ENCODE measurements at regions of chr12 and their contacts with region 1.

Region 1: GRCh38 chr12:22018860-22019259 is 27.2 kb upstream of the CMAS start:
- DNase-seq: no peak
- ATAC-seq: peak; percentile 52

Region 2: DNA sequence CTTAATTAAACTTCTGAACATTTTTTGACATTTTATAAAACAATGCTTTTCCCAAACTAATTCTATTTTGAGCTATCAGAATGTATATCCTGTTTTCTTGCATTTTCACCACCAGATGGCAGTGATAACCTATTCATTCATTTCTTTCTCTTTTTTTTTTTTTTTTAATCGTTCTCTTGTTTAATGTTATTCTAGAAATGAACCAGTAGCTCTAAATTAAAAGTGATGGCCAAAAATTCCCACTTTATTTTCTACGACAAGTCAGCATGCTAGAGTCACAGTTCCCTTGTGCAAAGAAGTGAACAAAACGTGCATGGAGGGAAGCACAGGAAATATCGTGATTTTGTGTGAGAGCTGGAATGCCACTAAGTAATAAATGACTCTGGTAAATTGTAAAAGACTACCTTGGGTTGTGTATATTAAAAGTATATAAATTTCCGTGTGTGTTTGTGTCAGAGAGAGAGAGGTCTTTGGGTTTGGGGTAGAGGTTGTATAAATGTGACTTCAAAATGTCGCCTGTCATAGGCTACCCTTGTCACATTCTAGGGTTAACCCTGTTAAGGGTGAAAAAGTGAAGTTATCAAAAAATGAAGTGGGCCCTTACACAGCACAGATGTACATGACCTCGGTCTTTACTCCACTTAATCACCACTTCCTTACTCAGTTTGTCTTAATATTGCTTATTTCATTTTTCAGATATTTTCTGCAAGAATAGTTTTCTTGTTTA is 320.8 kb before region 1 on chr12:
- intact Hi-C with region 1: loop called (anchors 5 kb)
- DNase-seq: no peak
- ATAC-seq: peak; percentile 36

Region 3: DNA sequence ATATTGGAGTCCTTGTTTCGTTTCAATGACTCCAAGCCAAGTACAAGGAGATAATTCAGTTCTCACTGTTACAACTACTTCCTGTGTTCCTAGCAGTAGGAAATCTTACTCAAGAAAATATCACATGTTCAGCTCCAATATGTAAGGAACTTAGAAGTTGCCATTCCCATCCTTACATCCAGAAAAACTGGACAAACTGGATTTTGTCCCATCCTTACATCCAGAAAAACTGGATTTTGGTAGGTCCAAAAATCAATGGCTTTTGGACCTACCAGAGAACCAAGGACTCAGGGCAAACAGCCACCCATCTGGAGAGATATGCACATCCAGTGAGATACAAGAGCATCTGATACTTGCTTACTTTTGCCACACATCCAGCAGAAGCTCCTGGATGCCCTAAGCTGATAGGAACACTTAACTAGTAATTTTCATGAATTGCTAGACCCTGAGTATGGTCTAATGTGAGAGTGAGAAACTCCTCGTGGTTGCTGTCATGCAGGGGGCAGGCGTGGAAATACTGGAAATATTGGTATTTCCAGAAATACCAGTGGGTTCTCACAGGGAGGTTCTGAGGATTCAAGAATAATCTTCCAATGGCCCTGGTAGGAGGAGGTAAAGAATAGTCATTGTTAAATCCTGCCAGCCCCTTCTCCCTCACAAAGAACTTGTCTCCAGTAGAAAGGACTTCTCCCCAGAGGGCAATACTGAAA is 51.2 kb after region 1 on chr12:
- intact Hi-C with region 1: no loop called
- DNase-seq: no peak
- ATAC-seq: no peak

Region 4: GRCh38 chr12:22105542-22105941 is 86.7 kb after region 1 on chr12:
- intact Hi-C with region 1: no loop called
- DNase-seq: no peak
- ATAC-seq: no peak

Region 5: GRCh38 chr12:22299294-22299912 is 280.5 kb after region 1 on chr12:
- intact Hi-C with region 1: no loop called
- DNase-seq: no peak
- ATAC-seq: no peak